ENCODE measurements at regions of chr10 and their contacts with region 1.

Region 1: DNA sequence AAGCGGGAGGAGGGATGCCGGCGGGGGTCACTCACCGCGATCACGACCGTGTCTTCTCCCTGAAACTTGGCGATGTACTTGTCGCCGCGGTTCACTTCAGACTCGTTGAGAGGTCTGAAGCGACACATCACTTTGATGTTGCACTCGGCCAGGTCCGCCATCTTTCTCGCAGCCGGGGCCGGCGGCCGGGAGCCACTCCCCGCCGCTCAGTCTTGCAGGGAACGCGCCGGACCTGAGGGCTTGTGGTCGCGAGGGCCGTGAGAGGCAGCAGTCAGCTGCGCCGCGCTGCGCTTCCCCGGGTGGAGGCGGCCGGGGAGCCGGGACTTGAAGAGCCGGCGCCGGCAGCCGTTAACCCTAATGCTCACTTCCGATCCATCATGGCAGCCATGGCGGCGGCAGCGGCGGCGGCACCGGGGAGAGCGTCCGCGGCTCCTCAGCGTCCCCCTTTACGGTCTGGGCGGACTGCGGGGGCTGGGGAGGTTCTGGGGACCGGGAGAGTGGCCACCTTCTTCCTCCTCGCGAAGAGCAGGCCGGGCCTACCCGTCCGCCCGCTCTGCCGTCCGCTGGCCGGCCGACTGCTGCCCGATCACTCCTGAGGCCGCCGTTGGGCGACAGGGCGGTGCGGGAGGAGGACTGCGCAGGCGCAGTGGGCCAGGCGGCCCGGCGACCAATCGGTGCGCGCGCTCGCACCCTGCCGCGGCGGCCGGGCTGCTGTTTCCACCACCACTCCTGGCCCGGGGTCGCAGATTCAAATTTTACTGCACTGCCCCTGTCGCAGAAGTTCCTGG is at the start of gene KIF5B:
- DNase-seq: peak; percentile 87 to 92 (median 89)
- H3K4me3 ChIP-seq: peak within 1 kb of the TSS; percentile 79 to 98 (median 92)
- H3K27ac ChIP-seq: peak within 1 kb of the TSS; percentile 97 to 99 (median 98)
- H3K4me1 ChIP-seq: peaks cover 28 to 38% of the 10 kb centered on the region in 2 donors
- H3K27me3 ChIP-seq: no peaks in the 10 kb centered on the region
- CTCF ChIP-seq: no peak
- POLR2A ChIP-seq: peak; percentile 98 to 99
- total RNA-seq, gene KIF5B: 60.4 to 139 (median 87.5) TPM

Region 2: DNA sequence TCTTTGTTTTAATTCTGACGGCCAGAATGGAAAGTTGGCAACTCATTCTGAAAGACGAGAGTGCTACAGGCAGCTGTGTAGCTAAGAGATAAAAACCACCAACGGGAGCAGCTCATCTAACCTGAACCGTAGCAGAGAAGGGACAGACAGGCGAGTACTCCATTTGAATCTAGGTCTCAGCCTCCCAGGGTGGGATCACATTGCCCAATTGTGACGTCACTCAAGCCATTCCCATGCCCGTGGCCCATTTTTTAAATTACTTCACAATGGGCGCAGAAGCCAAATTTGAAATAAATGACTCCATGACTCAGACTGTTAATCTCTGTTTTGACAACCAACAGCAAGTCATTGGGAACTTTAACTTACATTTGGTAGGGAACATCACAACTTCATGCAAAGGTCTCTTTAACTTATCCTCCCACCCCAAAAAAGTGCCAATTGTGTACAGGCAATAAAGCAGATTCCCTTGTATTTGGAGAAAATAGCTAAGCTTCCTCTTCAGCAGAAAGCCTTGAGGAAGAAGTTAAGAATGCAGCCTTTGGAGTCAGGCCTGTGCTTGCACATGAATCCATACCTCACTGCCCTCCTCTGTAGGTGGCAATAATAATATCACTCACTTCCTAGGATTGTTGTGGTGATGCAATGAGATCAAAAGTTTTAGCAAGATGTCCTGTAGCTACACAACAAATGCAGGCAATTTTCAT is 93.4 kb after region 1 on chr10:
- intact Hi-C with region 1: loop called in 1 of 2 experiments (anchors 10 kb)
- DNase-seq: peak; percentile 73 to 93 (median 90)
- H3K4me3 ChIP-seq: no peak overlapping the region
- H3K27ac ChIP-seq: peak overlapping the region in 4 of 5 donors; percentile 46 to 87 (median 72)
- H3K4me1 ChIP-seq: peaks cover 19 to 30% of the 10 kb centered on the region in 2 donors
- H3K27me3 ChIP-seq: no peaks in the 10 kb centered on the region
- CTCF ChIP-seq: no peak
- POLR2A ChIP-seq: peak in 1 of 2 donors; percentile 61

Region 3: GRCh38 chr10:32318476-32318896 is 262.5 kb after region 1 on chr10:
- intact Hi-C with region 1: no loop called
- DNase-seq: peak in 4 of 7 donors; percentile 33 to 60 (median 44)
- H3K4me3 ChIP-seq: no peak overlapping the region
- H3K27ac ChIP-seq: peak overlapping the region in 4 of 5 donors; percentile 11 to 76 (median 42)
- H3K4me1 ChIP-seq: peaks cover 36 to 89% of the 10 kb centered on the region in 2 donors
- H3K27me3 ChIP-seq: no peaks in the 10 kb centered on the region
- CTCF ChIP-seq: no peak
- POLR2A ChIP-seq: no peak

Measured in adrenal gland (tissue), 19 donors.